Activated CD8-positive, alpha-beta T cell treated with anti-CD3 and anti-CD28 coated beads for 36 hours (primary cell): ENCODE measurements at regions of chr10 and their contacts with region 1.

Region 1: GRCh38 chr10:62816331-62817120 is at the start of gene EGR2:
- DNase-seq: peak; percentile 98
- ATAC-seq: peak; percentile 77
- H3K4me3 Mint-ChIP-seq: peak within 1 kb of the TSS; percentile 97
- H3K27ac Mint-ChIP-seq: peak within 1 kb of the TSS; percentile 100
- H3K4me1 Mint-ChIP-seq: peaks cover 36% of the 10 kb centered on the region
- H3K27me3 Mint-ChIP-seq: peaks cover 20% of the 10 kb centered on the region
- CTCF ChIP-seq: no peak
- total RNA-seq, gene EGR2: 45.6 to 46.6 TPM

Region 2: GRCh38 chr10:62610649-62611229 is 205.8 kb before region 1 on chr10:
- CTCF ChIA-PET with region 1: interaction called, 128 read pairs
- POLR2A ChIA-PET with region 1: interaction called, 12 read pairs
- intact Hi-C with region 1: loop called (anchors 2 kb)
- DNase-seq: peak; percentile 86
- ATAC-seq: peak; percentile 81
- H3K4me3 Mint-ChIP-seq: no peak overlapping the region
- H3K27ac Mint-ChIP-seq: no peak overlapping the region
- H3K4me1 Mint-ChIP-seq: peaks cover 40% of the 10 kb centered on the region
- H3K27me3 Mint-ChIP-seq: peaks cover 4% of the 10 kb centered on the region
- CTCF ChIP-seq: peak; percentile 87

Region 3: GRCh38 chr10:62681211-62681940 is 135.2 kb before region 1 on chr10:
- CTCF ChIA-PET with region 1: interaction called, 33 read pairs
- POLR2A ChIA-PET with region 1: interaction called, 20 read pairs
- intact Hi-C with region 1: loop called (anchors 1 kb)
- DNase-seq: peak; percentile 95
- ATAC-seq: peak; percentile 93
- H3K4me3 Mint-ChIP-seq: no peak overlapping the region
- H3K27ac Mint-ChIP-seq: peak overlapping the region; percentile 89
- H3K4me1 Mint-ChIP-seq: peaks cover 40% of the 10 kb centered on the region
- H3K27me3 Mint-ChIP-seq: no peaks in the 10 kb centered on the region
- CTCF ChIP-seq: peak; percentile 72

Region 4: DNA sequence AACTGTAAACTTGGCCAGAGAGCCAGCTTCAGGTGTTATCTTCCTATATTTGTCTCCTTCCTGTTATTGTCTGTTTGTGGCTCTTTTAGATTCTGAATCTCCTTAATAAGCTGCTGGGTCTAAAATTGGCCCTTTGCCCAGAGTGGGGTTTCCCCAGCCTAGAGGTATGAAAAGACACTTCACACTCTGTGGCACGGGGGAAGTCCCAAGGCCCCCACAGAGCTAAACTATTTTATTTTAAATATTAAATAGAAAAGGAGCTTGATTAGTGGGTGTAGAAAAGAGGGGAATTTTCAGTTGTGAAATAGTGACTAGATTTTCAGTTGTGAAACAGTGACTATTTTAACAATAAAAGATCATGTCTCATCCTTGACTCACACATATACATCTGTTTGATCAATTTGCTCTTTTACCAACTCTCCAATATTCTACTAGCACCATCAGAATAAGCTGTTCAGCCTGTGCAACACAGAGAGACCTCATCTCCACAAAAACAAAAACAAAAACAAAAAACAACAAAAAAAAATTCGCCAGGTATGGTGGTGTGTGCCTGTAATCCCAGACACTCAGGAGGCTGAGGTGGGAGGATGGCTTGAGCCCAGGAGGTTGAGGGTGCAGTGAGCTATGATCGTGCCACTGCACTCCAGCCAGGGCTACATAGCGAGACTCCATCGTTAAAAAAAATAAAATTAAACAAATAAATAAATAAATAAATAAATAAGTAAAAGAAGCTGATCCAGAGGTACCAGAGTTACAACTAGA is 36.9 kb before region 1 on chr10:
- CTCF ChIA-PET with region 1: interaction called, 6 read pairs
- POLR2A ChIA-PET with region 1: interaction called, 16 read pairs
- intact Hi-C with region 1: loop called (anchors 1 kb)
- DNase-seq: peak; percentile 98
- ATAC-seq: peak; percentile 94
- H3K4me3 Mint-ChIP-seq: no peak overlapping the region
- H3K27ac Mint-ChIP-seq: peak overlapping the region; percentile 80
- H3K4me1 Mint-ChIP-seq: peaks cover 44% of the 10 kb centered on the region
- H3K27me3 Mint-ChIP-seq: no peaks in the 10 kb centered on the region
- CTCF ChIP-seq: no peak

Region 5: GRCh38 chr10:62831346-62831745 is 14.8 kb after region 1 on chr10:
- CTCF ChIA-PET with region 1: interaction called, 4 read pairs
- POLR2A ChIA-PET with region 1: interaction called, 10 read pairs
- intact Hi-C with region 1: no loop called
- DNase-seq: no peak
- ATAC-seq: no peak
- H3K4me3 Mint-ChIP-seq: no peak overlapping the region
- H3K27ac Mint-ChIP-seq: no peak overlapping the region
- H3K4me1 Mint-ChIP-seq: no peaks in the 10 kb centered on the region
- H3K27me3 Mint-ChIP-seq: peaks cover 15% of the 10 kb centered on the region
- CTCF ChIP-seq: no peak

Region 6: GRCh38 chr10:63083904-63084689 is 267.6 kb after region 1 on chr10:
- CTCF ChIA-PET with region 1: interaction called, 10 read pairs
- POLR2A ChIA-PET with region 1: no interaction called
- intact Hi-C with region 1: loop called (anchors 5 kb)
- DNase-seq: peak; percentile 61
- ATAC-seq: peak; percentile 75
- H3K4me3 Mint-ChIP-seq: no peak overlapping the region
- H3K27ac Mint-ChIP-seq: no peak overlapping the region
- H3K4me1 Mint-ChIP-seq: no peaks in the 10 kb centered on the region
- H3K27me3 Mint-ChIP-seq: peaks cover 16% of the 10 kb centered on the region
- CTCF ChIP-seq: peak; percentile 75

Region 7: GRCh38 chr10:63157845-63158624 is 341.5 kb after region 1 on chr10:
- CTCF ChIA-PET with region 1: interaction called, 26 read pairs
- POLR2A ChIA-PET with region 1: no interaction called
- intact Hi-C with region 1: no loop called
- DNase-seq: peak; percentile 41
- ATAC-seq: peak; percentile 85
- H3K4me3 Mint-ChIP-seq: no peak overlapping the region
- H3K27ac Mint-ChIP-seq: no peak overlapping the region
- H3K4me1 Mint-ChIP-seq: peaks cover 4% of the 10 kb centered on the region
- H3K27me3 Mint-ChIP-seq: no peaks in the 10 kb centered on the region
- CTCF ChIP-seq: peak; percentile 93